Activated CD4-positive, alpha-beta T cell treated with anti-CD3 and anti-CD28 coated beads, Interleukin-2, amount 10 ng/mL, durations not matched to agents 24 days and 14 days (primary cell): ENCODE measurements at regions of chr5 and their contacts with region 1.

Region 1: GRCh38 chr5:54580997-54581811 is 63.6 kb downstream of the SNX18 start:
- DNase-seq: no peak
- H3K4me3 Mint-ChIP-seq: no peak overlapping the region
- H3K27ac Mint-ChIP-seq: no peak overlapping the region
- H3K4me1 Mint-ChIP-seq: no peaks in the 10 kb centered on the region
- H3K27me3 Mint-ChIP-seq: peaks cover 3% of the 10 kb centered on the region

Region 2: DNA sequence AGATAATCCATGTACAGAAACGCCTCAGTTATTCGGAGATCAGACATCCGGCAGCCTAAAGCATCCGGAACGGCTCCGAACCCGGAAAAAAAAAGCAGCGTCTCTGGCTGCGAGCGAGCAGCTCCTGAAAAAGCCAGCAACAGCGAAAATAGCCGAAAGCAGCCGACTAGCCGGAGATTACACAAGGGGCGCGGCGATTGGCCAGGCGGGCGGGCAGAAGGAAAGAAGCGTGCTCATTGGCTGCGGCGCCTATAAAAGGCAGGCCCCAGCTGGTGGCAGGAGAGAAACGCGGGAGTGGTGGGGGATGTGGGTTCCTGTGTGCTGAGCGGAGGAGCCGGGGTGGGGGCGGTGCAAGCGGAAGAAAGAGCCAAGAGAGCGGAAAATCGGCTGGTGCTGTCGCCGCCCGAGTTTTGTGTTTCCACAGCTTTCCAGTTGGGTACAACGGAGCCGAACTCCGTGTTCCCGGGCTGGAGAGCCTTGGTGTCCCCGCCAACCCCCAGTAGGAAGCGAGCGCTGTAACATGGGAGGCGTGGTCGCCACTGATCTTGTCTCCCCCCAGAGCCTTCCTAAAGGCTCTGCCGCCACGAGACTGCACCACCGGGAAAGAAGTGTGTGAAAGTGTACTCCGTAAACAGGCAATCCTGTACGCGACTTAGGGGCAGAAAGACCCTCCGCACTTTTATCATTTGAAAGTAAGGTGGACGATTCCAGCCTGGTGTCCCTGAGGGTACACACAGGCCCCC is 270.6 kb before region 1 on chr5 and contains the start of gene ARL15:
- intact Hi-C with region 1: no loop called
- DNase-seq: peak; percentile 99
- H3K4me3 Mint-ChIP-seq: peak within 1 kb of the TSS; percentile 88
- H3K27ac Mint-ChIP-seq: peak within 1 kb of the TSS; percentile 88
- H3K4me1 Mint-ChIP-seq: peaks cover 22% of the 10 kb centered on the region
- H3K27me3 Mint-ChIP-seq: peaks cover 18% of the 10 kb centered on the region
- total RNA-seq, gene ARL15: 4.5 and 7.4 TPM in 2 replicates

Region 3: DNA sequence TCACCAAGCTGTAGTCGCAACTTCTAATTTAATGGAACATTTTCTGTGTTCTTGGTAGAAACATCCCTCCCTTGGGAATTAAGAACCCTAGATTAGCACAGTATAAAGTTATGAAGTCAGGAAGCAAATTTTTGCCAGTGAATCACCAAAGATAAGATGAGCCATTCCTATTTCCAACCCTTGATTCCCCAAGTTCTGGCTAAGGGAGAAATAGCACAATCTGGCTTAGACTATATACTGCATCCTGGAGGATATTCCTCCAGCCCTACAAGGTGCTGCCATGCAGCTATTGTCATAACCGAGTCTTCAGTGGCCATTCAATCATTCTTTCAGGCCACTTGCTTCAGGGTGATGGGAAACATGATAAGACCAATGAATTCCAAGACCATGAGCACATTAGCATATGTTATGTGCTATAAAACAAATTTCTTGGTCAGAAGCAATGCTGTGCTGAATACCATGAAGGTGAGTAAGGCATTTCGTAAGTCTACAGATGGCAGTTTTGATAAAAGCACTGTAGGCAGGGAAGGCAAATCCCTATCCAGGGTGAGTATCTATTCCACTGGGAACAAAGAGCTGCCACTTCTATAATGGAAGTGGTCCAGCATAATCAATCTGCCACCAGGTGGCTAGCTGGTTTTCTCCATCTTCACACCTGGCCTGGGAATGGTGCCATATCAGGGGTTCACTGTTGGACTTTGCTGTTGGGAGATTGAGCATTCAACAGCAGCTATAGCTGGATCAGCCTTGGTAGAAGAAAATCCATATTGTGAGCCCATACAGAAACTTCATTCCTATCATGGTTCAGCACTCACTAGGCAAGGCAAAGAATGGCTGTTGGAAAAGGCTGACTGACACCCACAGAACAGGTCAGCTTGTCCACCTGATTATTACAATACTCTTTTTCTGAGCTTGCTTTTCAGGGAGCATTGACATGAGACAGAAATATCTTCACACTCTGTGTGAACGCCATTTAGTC is 251.2 kb before region 1 on chr5:
- intact Hi-C with region 1: no loop called
- DNase-seq: no peak
- H3K4me3 Mint-ChIP-seq: no peak overlapping the region
- H3K27ac Mint-ChIP-seq: no peak overlapping the region
- H3K4me1 Mint-ChIP-seq: peaks cover 5% of the 10 kb centered on the region
- H3K27me3 Mint-ChIP-seq: peaks cover 2% of the 10 kb centered on the region

Region 4: GRCh38 chr5:54524704-54525103 is 56.5 kb before region 1 on chr5:
- intact Hi-C with region 1: no loop called
- DNase-seq: no peak
- H3K4me3 Mint-ChIP-seq: no peak overlapping the region
- H3K27ac Mint-ChIP-seq: no peak overlapping the region
- H3K4me1 Mint-ChIP-seq: peaks cover 42% of the 10 kb centered on the region
- H3K27me3 Mint-ChIP-seq: no peaks in the 10 kb centered on the region

Region 5: GRCh38 chr5:54610197-54610944 is 29.2 kb after region 1 on chr5:
- intact Hi-C with region 1: no loop called
- DNase-seq: peak; percentile 84
- H3K4me3 Mint-ChIP-seq: peak overlapping the region; percentile 62
- H3K27ac Mint-ChIP-seq: peak overlapping the region; percentile 78
- H3K4me1 Mint-ChIP-seq: peaks cover 25% of the 10 kb centered on the region
- H3K27me3 Mint-ChIP-seq: no peaks in the 10 kb centered on the region

Region 6: DNA sequence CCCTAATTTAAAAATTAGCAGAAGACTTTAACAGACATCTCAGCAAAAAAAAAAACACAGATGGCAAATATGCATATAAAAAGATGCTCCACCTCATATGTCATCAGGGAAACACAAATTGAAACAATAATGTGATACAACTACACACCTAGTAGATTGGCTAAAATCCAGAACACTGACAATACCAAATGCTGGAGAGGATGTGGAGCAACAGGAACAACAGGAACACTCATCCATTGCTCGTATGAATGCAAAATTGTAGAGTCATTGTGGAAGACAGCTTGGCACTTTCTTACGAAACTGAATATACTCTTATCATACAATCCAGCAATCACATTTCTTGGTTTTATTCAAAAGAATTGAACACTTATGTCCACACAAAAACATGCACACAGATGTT is 623.8 kb after region 1 on chr5:
- intact Hi-C with region 1: loop called (anchors 5 kb)
- DNase-seq: no peak
- H3K4me3 Mint-ChIP-seq: no peak overlapping the region
- H3K27ac Mint-ChIP-seq: no peak overlapping the region
- H3K4me1 Mint-ChIP-seq: peaks cover 1% of the 10 kb centered on the region
- H3K27me3 Mint-ChIP-seq: peaks cover 58% of the 10 kb centered on the region